ENCODE measurements at regions of chr20 and their contacts with region 1.

Region 1: DNA sequence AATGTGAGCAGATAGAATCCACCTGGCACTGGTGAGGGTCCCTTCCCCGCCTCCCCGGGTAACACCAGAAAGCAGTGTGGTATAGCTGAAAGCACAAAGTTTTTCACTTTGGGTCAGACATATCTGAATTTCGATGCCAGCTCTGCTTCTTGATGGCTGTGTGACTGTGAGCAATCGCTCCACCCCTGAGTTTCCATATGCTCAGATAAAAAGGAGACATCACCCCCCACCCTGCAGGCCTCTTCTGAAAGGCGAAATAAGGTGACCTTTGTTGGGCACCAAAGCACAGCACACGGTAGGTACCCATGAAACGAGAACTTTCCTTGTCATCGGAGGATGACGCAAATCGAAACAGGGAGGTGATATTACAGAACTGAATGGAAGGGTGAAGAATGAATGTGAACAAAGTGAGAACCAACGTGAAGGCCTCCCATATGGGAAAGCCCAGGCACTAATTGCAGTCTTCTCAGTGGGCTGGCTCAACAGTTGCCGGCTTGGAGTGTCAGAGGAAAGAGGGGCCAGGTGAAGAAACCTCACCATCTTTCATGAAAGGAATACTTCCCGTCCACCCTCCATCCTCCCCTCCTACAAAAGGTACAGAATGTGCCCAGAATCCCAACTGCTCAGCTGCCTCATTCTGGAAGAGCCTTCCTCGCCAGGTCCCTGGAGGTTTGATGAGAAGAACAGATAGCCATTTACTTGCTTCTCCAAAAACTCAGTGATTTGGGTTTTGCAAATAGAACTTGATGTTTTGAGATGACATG is 61.8 kb downstream of the NFATC2 start:
- DNase-seq: peak in 2 of 9 donors; percentile 36 to 66
- ATAC-seq: peak; percentile 68
- H3K4me3 ChIP-seq: peak overlapping the region; percentile 8
- H3K4me3 Mint-ChIP-seq: peak overlapping the region; percentile 60 to 86 (median 76)
- H3K27ac ChIP-seq: peak overlapping the region; percentile 63
- H3K27ac Mint-ChIP-seq: peak overlapping the region; percentile 60 to 94 (median 88)
- H3K4me1 ChIP-seq: peaks cover 30 to 33% of the 10 kb centered on the region in 2 donors
- H3K4me1 Mint-ChIP-seq: peaks cover 64 to 90% (median 86%) of the 10 kb centered on the region in 7 donors
- H3K27me3 ChIP-seq: no peaks in the 10 kb centered on the region
- H3K27me3 Mint-ChIP-seq: no peaks in the 10 kb centered on the region

Region 2: DNA sequence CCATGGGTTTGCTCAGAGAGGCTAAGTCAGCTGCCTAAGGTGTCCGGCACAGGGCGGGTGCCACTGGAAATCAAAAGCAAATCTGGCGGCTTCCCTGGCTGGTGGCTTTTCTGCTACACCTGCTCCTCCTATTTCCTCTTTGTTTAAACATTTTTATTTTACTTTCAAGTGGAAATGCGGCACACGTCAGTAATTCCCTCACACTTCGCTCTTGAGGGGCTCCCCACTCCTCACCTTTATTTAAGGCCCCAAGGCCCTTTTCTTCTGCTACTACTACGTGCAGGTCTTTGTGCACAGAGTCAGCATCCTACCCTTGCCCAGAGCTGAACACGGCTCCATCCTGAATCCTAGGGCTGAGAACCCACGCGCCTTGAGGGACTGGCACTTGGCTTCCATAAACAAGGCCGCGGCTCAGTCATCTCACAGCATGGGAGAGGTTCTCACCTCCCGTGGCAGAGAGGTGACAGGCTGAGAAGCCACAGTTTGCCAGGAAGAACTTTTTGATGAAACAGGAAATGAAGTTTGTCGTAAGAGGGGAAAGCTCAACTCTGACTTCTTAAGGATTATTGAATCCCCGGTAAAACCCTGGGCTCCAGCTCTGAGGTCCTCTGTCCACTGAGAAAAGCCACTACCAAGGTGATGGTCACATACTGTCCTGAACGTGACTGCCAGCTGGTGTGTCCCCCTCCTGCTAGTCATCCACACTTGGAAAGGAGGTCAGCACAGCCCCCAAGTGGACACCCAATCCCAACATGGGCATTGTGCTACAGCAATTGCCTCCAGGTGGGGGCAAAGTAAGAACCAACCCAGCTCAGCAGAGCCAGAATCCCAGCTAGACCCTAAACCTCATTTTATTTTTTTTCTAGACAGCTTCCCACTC is 13.8 kb after region 1 on chr20:
- CTCF ChIA-PET with region 1: interaction called, 3 read pairs
- POLR2A ChIA-PET with region 1: interaction called, 8 read pairs
- intact Hi-C with region 1: loop called (anchors 1 kb)
- DNase-seq: peak in 7 of 9 donors; percentile 53 to 73 (median 67)
- ATAC-seq: peak; percentile 57
- H3K4me3 ChIP-seq: peak overlapping the region; percentile 27
- H3K4me3 Mint-ChIP-seq: peak overlapping the region; percentile 72 to 99 (median 84)
- H3K27ac ChIP-seq: peak overlapping the region; percentile 71
- H3K27ac Mint-ChIP-seq: peak overlapping the region; percentile 89 to 100 (median 98)
- H3K4me1 ChIP-seq: peaks cover 74 to 97% of the 10 kb centered on the region in 2 donors
- H3K4me1 Mint-ChIP-seq: peaks cover 89 to 100% (median 99%) of the 10 kb centered on the region in 7 donors
- H3K27me3 ChIP-seq: no peaks in the 10 kb centered on the region
- H3K27me3 Mint-ChIP-seq: no peaks in the 10 kb centered on the region